SK-N-SH (cell line): ENCODE measurements at regions of chr10 and their contacts with region 1.

Region 1: GRCh38 chr10:90787393-90788198 is 70.2 kb downstream of the HTR7 start:
- DNase-seq: peak; percentile 36
- H3K4me3 ChIP-seq: no peak overlapping the region; a peak in 1 of 4 replicates
- H3K27ac ChIP-seq: no peak overlapping the region
- H3K4me1 ChIP-seq: no peaks in the 10 kb centered on the region
- H3K27me3 ChIP-seq: peaks cover 34% of the 10 kb centered on the region; the same call in 1 of the 2 replicates
- CTCF ChIP-seq: peak; percentile 81
- EP300 ChIP-seq: no peak
- RAD21 ChIP-seq: peak; percentile 66

Region 2: GRCh38 chr10:90674928-90675327 is 112.7 kb before region 1 on chr10:
- CTCF ChIA-PET with region 1: no interaction called
- POLR2A ChIA-PET with region 1: no interaction called
- DNase-seq: no peak
- H3K4me3 ChIP-seq: no peak overlapping the region
- H3K27ac ChIP-seq: no peak overlapping the region
- H3K4me1 ChIP-seq: no peaks in the 10 kb centered on the region
- H3K27me3 ChIP-seq: no peaks in the 10 kb centered on the region; the same call in 1 of the 2 replicates
- CTCF ChIP-seq: no peak
- EP300 ChIP-seq: no peak
- RAD21 ChIP-seq: no peak

Region 3: DNA sequence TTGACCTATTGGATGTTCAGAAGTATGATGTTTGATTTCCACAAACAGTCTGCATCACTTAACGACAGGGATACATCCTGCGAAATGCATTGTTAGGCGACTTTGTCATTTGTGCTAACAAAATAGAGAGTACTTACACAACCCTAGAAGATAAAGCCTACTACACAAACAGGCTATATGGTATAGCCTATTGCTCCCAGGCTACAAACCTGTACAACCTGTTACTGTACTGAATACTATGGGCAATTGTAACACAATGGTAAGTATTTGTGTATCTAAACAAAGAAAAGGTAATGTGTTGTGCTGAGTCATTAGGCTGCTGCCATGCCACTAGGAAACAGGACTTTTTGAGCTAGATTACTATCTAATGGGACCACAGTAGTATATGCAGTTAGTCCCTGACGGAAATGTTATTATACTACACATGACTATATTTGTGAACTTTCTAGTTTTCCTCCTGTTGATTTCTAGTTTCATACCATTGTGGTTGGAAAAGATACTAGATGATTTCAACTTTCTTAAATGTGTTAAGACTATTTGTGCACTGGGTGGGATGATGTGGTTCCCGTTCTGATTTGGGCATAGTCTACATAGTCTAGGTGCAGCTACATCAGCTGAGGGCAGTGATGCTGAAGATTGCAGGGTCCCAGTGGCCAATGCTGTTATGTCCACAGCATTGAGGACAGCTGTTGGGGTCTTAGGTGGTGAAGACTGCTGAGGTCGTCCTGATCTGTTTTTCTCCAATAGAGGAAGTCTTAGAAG is 91.5 kb before region 1 on chr10:
- CTCF ChIA-PET with region 1: no interaction called
- POLR2A ChIA-PET with region 1: no interaction called
- DNase-seq: no peak
- H3K4me3 ChIP-seq: no peak overlapping the region
- H3K27ac ChIP-seq: no peak overlapping the region
- H3K4me1 ChIP-seq: no peaks in the 10 kb centered on the region
- H3K27me3 ChIP-seq: no peaks in the 10 kb centered on the region
- CTCF ChIP-seq: no peak
- EP300 ChIP-seq: no peak
- RAD21 ChIP-seq: no peak

Region 4: GRCh38 chr10:90775351-90776028 is 12.1 kb before region 1 on chr10:
- CTCF ChIA-PET with region 1: interaction called, 12 read pairs
- POLR2A ChIA-PET with region 1: no interaction called
- DNase-seq: no peak
- H3K4me3 ChIP-seq: no peak overlapping the region
- H3K27ac ChIP-seq: no peak overlapping the region
- H3K4me1 ChIP-seq: no peaks in the 10 kb centered on the region
- H3K27me3 ChIP-seq: no peaks in the 10 kb centered on the region; the same call in 1 of the 2 replicates
- CTCF ChIP-seq: no peak
- EP300 ChIP-seq: no peak
- RAD21 ChIP-seq: no peak

Region 5: GRCh38 chr10:90798482-90798881 is 10.9 kb after region 1 on chr10:
- CTCF ChIA-PET with region 1: interaction called, 15 read pairs
- POLR2A ChIA-PET with region 1: no interaction called
- DNase-seq: no peak
- H3K4me3 ChIP-seq: no peak overlapping the region
- H3K27ac ChIP-seq: no peak overlapping the region
- H3K4me1 ChIP-seq: no peaks in the 10 kb centered on the region
- H3K27me3 ChIP-seq: peaks cover 22% of the 10 kb centered on the region; the same call in 1 of the 2 replicates
- CTCF ChIP-seq: no peak
- EP300 ChIP-seq: no peak
- RAD21 ChIP-seq: no peak